ENCODE measurements at regions of chr13 and their contacts with region 1.

Region 1: GRCh38 chr13:80249516-80250212 is 91.3 kb downstream of the SPRY2 start:
- DNase-seq: no peak
- ATAC-seq: no peak
- H3K4me3 ChIP-seq: peak overlapping the region in 4 of 10 donors; percentile 6 to 15 (median 11)
- H3K27ac ChIP-seq: peak overlapping the region in 4 of 10 donors; percentile 23 to 38 (median 29)
- H3K4me1 ChIP-seq: peaks cover 0 to 9% (median 0%) of the 10 kb centered on the region in 9 donors
- H3K27me3 ChIP-seq: no peaks in the 10 kb centered on the region
- CTCF ChIP-seq: no peak

Region 2: GRCh38 chr13:78341032-78341431 is 1908.6 kb before region 1 on chr13:
- intact Hi-C with region 1: loop called in 1 of 10 experiments (anchors 5 kb)
- DNase-seq: no peak
- ATAC-seq: no peak
- H3K4me3 ChIP-seq: no peak overlapping the region
- H3K27ac ChIP-seq: no peak overlapping the region
- H3K4me1 ChIP-seq: no peaks in the 10 kb centered on the region
- H3K27me3 ChIP-seq: no peaks in the 10 kb centered on the region
- CTCF ChIP-seq: no peak

Region 3: DNA sequence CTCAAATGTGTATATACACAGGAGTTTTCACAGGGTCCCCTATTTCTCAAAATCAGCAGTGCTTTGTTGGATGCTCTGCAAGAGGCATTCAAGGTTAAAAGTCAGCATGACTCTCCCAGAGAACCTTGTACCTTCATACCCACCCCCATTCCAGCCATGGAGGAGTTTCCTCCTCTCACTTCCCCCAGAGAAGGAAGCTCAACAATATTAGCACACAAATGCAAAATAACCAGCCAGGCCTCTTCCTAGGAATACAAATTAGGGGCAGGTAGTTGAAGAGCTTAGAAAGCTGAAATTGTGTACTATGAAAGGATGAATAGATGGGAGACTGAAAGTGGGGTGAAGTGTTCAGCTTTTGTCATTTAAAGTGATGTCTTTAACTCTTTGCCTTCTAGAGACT is 47.4 kb after region 1 on chr13:
- intact Hi-C with region 1: no loop called
- DNase-seq: no peak
- ATAC-seq: peak in 1 of 8 donors; percentile 34
- H3K4me3 ChIP-seq: no peak overlapping the region
- H3K27ac ChIP-seq: no peak overlapping the region
- H3K4me1 ChIP-seq: peaks cover 0 to 7% (median 0%) of the 10 kb centered on the region in 9 donors
- H3K27me3 ChIP-seq: no peaks in the 10 kb centered on the region
- CTCF ChIP-seq: no peak

Measured in heart right ventricle (tissue), 16 donors.